ENCODE measurements at regions of chr2 and their contacts with region 1.

Region 1: GRCh38 chr2:16756831-16757644 is 91.4 kb upstream of the CYRIA start:
- DNase-seq: peak; percentile 72
- ATAC-seq: peak; percentile 98
- H3K4me3 Mint-ChIP-seq: no peak overlapping the region
- H3K27ac Mint-ChIP-seq: peak overlapping the region; percentile 16
- H3K4me1 Mint-ChIP-seq: peaks cover 4% of the 10 kb centered on the region
- H3K27me3 Mint-ChIP-seq: no peaks in the 10 kb centered on the region
- CTCF ChIP-seq: no peak

Region 2: GRCh38 chr2:15939854-15940660 is 817.0 kb before region 1 on chr2 and contains the start of gene MYCN:
- CTCF ChIA-PET with region 1: interaction called, 6 read pairs
- POLR2A ChIA-PET with region 1: no interaction called
- intact Hi-C with region 1: loop called (anchors 1 kb)
- DNase-seq: no peak
- ATAC-seq: no peak
- H3K4me3 Mint-ChIP-seq: peak within 1 kb of the TSS; percentile 64
- H3K27ac Mint-ChIP-seq: no peak within 1 kb of the TSS
- H3K4me1 Mint-ChIP-seq: peaks cover 30% of the 10 kb centered on the region
- H3K27me3 Mint-ChIP-seq: peaks cover 59% of the 10 kb centered on the region
- CTCF ChIP-seq: no peak
- total RNA-seq, gene MYCN: not detected in 2 replicates

Region 3: DNA sequence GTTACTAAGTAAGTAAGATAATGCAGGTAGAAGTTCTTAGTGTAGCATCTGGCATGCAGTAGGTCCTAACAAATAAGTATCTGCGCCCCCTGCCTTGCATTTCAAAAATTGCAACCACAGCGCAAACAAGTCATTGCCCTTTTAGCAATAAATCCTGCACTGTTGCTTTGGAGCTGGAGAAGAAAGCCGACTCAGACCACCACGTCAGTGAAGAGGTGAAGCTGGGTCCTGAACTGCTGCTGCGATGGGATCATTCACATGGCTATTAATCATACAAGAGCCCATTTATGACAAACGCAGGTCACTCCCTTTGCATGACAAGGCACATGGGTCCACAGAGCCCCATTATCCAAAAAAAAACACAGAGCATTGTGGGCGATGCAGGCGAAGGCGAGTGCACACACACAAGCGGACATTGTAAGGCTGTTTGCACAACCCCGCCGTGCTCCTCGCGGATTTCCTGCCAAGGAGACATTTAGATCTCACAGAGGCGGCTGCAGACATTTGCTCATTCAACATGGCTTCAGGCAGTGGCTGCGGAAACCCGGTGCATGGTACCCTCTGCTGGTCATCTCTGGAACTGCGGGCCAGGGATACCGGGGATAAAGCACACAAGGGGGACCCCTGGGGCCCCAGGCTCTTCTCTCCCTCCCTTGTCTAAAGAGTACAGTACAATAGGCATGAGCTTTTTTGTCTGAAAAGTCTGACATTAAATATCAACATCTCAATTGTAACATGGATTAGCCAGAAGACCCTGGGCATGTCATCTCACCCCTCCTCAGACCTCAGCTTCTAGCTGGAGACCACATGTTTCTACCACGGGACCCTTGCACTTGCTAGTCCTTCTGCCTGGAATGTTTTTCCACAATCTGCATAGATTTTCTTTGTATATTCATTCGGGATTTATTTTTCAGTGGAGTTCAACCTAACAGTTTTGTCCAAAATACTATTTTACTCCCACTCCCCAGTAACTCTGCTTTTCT is 148.1 kb before region 1 on chr2:
- CTCF ChIA-PET with region 1: interaction called, 129 read pairs
- POLR2A ChIA-PET with region 1: interaction called, 4 read pairs
- intact Hi-C with region 1: loop called (anchors 1 kb)
- DNase-seq: peak; percentile 79
- ATAC-seq: peak; percentile 92
- H3K4me3 Mint-ChIP-seq: peak overlapping the region; percentile 79
- H3K27ac Mint-ChIP-seq: peak overlapping the region; percentile 53
- H3K4me1 Mint-ChIP-seq: peaks cover 31% of the 10 kb centered on the region
- H3K27me3 Mint-ChIP-seq: no peaks in the 10 kb centered on the region
- CTCF ChIP-seq: peak; percentile 83

Region 4: GRCh38 chr2:16625201-16625729 is 131.8 kb before region 1 on chr2:
- CTCF ChIA-PET with region 1: interaction called, 65 read pairs
- POLR2A ChIA-PET with region 1: no interaction called
- intact Hi-C with region 1: loop called (anchors 1 kb)
- DNase-seq: no peak
- ATAC-seq: peak; percentile 55
- H3K4me3 Mint-ChIP-seq: peak overlapping the region; percentile 62
- H3K27ac Mint-ChIP-seq: peak overlapping the region; percentile 94
- H3K4me1 Mint-ChIP-seq: peaks cover 99% of the 10 kb centered on the region
- H3K27me3 Mint-ChIP-seq: no peaks in the 10 kb centered on the region
- CTCF ChIP-seq: no peak

Region 5: GRCh38 chr2:16656784-16657391 is 100.2 kb before region 1 on chr2:
- CTCF ChIA-PET with region 1: interaction called, 12 read pairs
- POLR2A ChIA-PET with region 1: no interaction called
- intact Hi-C with region 1: no loop called
- DNase-seq: no peak
- ATAC-seq: peak; percentile 59
- H3K4me3 Mint-ChIP-seq: peak overlapping the region; percentile 77
- H3K27ac Mint-ChIP-seq: peak overlapping the region; percentile 89
- H3K4me1 Mint-ChIP-seq: peaks cover 99% of the 10 kb centered on the region
- H3K27me3 Mint-ChIP-seq: no peaks in the 10 kb centered on the region
- CTCF ChIP-seq: no peak

Region 6: DNA sequence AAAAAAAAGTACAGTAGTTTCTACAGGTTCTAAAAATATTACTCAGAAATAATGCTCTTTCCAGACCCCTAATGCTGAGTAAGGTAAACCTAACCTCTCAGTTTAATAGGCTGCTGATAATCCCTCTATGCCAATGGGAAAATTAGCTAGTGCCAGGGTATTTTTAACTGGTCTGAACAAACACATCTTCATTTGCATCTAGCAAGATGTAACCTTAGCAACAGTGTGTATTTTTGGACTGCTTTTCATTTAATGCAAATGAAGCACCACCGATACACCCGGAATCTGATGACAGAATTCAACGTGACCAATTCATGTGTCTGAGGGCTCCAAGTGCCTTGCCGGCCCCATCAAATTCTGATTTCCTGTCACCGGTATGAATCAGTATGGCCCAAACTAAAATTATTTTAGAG is 44.0 kb before region 1 on chr2:
- CTCF ChIA-PET with region 1: interaction called, 3 read pairs
- POLR2A ChIA-PET with region 1: no interaction called
- intact Hi-C with region 1: loop called (anchors 2 kb)
- DNase-seq: no peak
- ATAC-seq: peak; percentile 80
- H3K4me3 Mint-ChIP-seq: peak overlapping the region; percentile 72
- H3K27ac Mint-ChIP-seq: peak overlapping the region; percentile 90
- H3K4me1 Mint-ChIP-seq: peaks cover 58% of the 10 kb centered on the region
- H3K27me3 Mint-ChIP-seq: no peaks in the 10 kb centered on the region
- CTCF ChIP-seq: no peak

Region 7: DNA sequence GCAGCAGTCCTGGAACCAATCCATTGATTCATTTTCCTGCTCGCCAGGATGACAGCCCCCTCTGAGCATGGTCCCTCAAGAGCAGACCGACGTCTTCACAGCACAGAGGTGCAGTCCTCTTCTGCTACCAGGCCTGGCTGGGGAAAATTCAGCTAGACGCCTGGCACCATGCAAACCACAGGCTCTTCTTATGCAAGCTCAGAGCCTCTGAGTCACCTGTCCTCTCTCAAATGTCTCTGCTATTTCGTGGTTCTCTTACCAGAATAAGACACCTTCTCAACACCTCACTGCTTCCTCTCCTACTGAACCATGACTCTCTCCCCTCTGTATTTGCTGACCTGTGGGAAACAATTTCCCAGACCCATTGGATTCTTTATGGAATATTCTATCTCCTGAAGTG is 11.6 kb before region 1 on chr2:
- CTCF ChIA-PET with region 1: interaction called, 13 read pairs
- POLR2A ChIA-PET with region 1: interaction called, 3 read pairs
- intact Hi-C with region 1: no loop called
- DNase-seq: no peak
- ATAC-seq: peak; percentile 66
- H3K4me3 Mint-ChIP-seq: no peak overlapping the region
- H3K27ac Mint-ChIP-seq: no peak overlapping the region
- H3K4me1 Mint-ChIP-seq: peaks cover 28% of the 10 kb centered on the region
- H3K27me3 Mint-ChIP-seq: peaks cover 2% of the 10 kb centered on the region
- CTCF ChIP-seq: no peak